Posterior cingulate gyrus (tissue), 11 donors: ENCODE measurements at regions of chr2 and their contacts with region 1.

Region 1: DNA sequence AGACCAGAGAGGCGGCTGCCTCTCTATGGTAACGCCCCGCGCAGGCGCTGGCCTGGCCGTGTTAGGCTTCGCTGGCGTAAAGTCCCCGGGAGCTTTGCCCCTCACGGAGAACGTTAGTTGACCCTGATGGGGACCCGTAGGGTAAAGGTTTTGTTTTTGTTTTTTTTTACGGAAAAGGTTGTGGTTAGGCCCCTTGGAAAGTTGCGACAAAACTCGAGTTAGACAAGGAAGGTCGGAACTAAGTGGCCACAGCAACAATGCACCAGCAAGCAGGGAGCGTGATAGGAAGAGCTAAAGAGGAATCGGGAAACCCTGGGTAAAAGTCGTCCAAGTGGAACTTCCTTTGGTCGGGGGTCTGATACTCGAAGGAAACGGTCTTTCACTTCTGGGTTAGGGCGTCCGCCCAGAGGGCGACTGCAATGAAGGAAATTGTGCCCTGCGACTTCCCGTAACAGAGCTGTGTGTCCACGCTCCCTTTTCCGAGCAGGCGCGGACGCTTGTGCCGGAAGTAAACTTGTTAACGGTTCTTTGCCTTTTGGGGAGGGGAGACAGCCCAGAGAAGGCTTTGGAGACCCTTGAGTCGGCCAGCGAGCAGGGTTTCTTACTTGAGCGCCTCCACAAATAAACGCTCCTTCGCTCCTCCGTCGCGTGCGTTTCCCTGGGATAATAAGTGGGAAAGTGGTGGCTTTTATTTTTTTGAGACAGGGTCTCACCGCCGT is 493 bp upstream of the CLASP1 start:
- DNase-seq: peak; percentile 93 to 99 (median 95)

Region 2: GRCh38 chr2:121400201-121400600 is 249.6 kb before region 1 on chr2:
- intact Hi-C with region 1: loop called (anchors 1 kb)
- DNase-seq: no peak

Region 3: DNA sequence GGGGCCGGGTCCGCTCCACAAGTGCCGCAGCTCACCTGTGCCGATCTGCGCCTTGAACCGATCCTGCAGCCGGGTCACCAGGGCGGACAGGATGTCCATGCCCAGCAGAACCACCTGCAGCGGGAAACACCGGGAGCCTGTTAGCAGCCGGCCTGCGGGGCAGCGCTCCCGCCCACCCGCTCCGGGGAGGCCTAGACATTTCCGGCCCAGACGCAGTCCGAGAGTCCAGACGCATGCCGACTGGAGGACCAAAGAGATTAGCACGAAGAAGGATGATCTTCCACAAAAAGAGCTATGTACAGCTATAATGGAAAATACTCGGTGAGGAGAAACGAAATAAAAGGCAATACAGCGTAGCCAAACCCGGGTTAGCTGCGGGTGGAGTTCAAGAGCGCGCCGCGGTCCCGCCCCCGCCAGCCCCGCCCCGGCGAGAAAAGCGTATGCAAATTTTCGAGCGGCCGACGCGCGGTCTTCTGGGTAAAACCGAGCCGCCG is 119.5 kb before region 1 on chr2:
- intact Hi-C with region 1: loop called (anchors 1 kb)
- DNase-seq: peak; percentile 73 to 96 (median 82)

Region 4: GRCh38 chr2:121561617-121562268 is 88.0 kb before region 1 on chr2:
- intact Hi-C with region 1: no loop called
- DNase-seq: no peak

Region 5: DNA sequence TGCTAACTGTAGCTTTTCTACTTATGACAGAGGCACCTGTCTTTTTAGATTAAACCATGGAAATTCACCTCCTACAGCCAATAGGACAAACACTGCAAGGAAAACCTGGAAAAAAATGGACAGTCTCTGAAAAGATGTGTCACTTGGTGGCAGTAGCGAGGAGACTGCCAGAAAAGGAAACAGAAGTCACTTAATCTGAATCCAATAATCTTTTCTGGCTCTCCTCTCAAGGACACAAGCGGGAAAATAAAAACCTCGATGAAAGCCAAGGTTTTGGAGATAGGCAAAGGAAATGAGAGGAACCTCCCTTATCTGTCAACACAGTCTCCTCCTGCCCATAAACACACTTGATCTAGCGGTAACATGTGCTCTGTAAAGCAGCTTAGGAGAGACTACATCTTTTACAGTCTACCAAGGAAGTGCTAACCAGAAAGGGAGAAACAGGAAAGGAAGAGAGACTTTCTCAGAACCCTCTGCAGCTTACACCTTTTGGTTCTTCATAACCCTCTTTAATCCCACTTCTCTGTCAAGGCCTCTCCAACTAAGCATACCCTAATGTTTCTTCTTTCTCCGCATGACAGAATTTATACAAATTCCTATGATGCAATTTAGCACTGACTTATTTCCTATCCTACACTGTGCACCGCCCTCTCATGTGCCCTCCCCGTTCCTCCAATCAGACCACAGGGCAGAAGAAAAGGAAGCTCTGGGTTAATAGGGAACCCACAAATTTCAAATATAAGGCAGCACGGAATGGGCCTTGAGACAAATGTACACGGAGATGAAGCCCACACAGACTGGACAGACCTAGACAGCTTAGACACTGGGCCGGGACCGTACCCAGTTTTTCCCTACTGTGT is 53.3 kb before region 1 on chr2:
- intact Hi-C with region 1: loop called (anchors 5 kb)
- DNase-seq: peak in 1 of 10 donors; percentile 26

Region 6: DNA sequence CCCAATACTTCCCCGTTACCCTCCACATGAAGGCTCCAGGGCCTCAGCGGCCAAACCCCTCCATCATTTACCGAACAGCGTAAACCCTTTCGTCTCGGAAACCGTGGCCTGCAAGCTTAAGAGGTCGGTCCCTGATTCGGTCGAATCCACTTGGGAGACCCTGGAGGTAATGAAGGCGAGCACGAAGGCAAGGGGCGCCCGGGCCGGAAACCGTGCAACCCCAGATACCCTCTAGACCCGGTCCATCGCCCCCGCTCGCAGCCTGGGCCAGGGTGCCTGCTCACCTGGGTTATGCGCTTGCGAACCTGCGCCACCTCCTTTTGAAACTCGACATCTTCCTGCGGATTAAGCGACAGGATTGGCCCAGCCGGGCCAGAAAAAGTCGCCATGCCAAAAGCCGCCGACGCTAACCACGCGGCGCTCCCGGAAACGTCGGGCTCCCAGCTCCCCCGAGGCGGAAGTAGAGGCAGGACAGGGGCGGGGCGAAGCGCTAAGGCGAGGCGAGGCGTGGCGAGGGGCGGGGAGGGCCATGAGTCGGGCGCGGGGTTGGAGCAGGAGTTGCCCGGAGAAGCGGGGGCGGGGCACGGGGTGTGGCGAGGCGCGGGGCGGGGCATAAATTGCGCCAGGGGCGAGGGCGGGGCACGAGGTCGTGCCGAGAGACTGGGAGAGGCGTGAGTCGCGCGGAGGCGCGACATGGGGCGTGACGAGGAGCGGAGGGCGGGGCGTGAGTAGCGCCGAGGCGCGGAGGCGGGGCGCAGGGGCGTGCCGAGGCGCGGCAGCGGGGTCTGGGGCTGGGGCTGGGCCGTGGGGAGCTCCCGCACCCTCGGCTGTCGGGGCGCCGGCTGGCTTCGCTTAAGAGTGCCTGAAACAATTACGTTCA is 86.9 kb after region 1 on chr2 and contains the start of gene NIFK:
- intact Hi-C with region 1: loop called (anchors 5 kb)
- DNase-seq: peak; percentile 97 to 100 (median 98)

Region 7: DNA sequence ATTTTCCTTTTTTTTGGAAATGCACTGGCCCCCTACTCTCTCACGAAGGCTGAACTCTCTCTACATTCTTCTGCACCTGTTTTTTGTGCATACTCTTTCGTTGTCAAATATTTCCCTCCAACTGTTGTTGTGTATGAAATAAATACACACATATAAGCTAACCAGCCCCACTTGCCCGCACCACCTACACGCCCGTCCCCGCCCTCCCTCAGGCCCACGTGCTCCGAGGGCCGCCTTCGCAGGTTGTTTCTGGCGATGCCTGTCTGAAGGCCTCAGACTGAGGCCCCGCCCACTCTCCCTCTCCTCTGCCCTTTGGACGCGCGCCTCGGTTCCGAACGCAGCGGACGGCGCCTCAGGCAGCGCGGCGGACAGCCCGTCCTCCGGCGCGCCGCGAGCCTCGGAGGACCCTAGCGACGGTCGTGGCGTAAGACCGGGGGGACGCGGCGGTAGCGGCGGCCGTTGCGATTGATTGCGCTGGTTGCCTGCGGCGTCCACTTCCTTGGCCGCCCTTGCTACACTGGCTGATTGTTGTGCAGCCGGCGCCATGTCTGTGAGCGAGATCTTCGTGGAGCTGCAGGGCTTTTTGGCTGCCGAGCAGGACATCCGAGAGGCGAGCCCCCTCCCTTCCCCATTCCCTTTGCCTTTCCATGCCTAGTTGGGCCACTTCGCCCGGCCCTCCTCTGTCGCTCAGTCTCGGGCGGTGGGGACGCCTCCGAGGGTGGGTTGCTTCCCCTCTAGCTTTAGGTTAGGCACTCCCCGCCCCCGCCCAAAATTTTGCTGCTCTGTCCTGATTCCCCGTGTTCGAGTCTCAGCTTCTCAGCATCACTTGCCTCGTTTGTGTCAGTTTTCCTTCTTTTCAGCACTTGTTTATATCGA is 105.7 kb after region 1 on chr2 and contains the start of gene TSN:
- intact Hi-C with region 1: loop called (anchors 5 kb)
- DNase-seq: peak; percentile 95 to 99 (median 98)